Common myeloid progenitor, CD34-positive (primary cell): ENCODE measurements at regions of chr7 and their contacts with region 1.

Region 1: GRCh38 chr7:26853788-26854393 is 10.5 kb downstream of the SKAP2 start:
- DNase-seq: peak; percentile 73 to 86 (median 83)
- H3K4me3 ChIP-seq: no peak overlapping the region
- H3K27ac ChIP-seq: no peak overlapping the region
- H3K4me1 ChIP-seq: peaks cover 5 to 39% (median 27%) of the 10 kb centered on the region in 4 experiments
- H3K27me3 ChIP-seq: no peaks in the 10 kb centered on the region

Region 2: GRCh38 chr7:26673271-26673670 is 180.6 kb before region 1 on chr7:
- CTCF ChIA-PET with region 1: no interaction called
- POLR2A ChIA-PET with region 1: no interaction called
- DNase-seq: peak in 1 of 3 donors; percentile 66
- H3K4me3 ChIP-seq: peak overlapping the region in 4 of 7 experiments; percentile 44 to 73 (median 53)
- H3K27ac ChIP-seq: peak overlapping the region; percentile 81 to 83
- H3K4me1 ChIP-seq: peaks cover 10 to 76% (median 49%) of the 10 kb centered on the region in 4 experiments
- H3K27me3 ChIP-seq: no peaks in the 10 kb centered on the region

Region 3: DNA sequence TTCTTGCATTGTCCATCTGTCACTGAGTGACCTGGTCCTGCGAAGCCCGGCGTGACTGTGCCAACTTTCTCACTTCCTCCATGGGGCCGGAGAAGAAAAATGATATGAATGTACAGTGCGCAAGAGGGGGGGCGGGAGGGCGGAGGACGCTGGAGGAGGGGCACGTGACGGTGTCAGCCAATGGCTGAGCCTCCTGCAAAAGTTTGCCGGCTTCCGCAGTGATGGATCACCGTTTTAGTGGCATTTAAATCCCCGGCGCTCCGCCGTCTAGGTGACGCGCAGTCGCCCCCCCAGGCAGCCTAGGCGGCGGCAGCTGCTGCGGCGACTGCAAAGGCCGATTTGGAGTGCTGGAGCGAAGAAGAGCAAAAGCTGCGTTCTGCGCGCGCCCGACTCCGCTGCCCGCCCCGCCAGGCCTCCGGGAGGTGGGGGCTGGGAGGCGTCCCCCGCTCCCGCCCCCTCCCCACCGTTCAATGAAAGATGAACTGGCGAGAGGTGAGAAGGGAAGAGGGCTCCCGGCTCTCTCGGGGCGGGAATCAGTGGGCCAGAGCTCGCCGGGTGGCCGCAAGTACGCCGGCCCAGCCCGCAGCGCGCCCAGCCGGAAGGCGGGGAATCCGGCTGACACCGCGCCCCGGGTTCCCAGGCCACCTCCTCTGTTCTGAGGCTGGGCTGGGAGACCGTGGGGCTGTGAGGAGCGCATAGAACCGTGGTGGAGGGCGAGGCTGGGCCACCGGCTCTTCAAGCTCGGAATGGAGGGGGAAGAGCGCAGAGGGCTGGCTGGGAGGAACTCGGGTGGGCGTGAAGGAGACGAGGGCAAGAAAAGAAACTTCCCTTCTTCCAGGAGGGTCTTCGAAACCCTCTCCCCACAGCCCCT is 242.2 kb after region 1 on chr7 and contains the start of gene HOXA1:
- CTCF ChIA-PET with region 1: interaction called, 24 read pairs
- POLR2A ChIA-PET with region 1: no interaction called
- DNase-seq: peak; percentile 87 to 93 (median 92)
- H3K4me3 ChIP-seq: peak within 1 kb of the TSS; percentile 57 to 82 (median 77)
- H3K27ac ChIP-seq: no peak within 1 kb of the TSS
- H3K4me1 ChIP-seq: peaks cover 2 to 47% (median 37%) of the 10 kb centered on the region in 4 experiments
- H3K27me3 ChIP-seq: peaks cover 30 to 98% (median 50%) of the 10 kb centered on the region in 5 experiments

Region 4: DNA sequence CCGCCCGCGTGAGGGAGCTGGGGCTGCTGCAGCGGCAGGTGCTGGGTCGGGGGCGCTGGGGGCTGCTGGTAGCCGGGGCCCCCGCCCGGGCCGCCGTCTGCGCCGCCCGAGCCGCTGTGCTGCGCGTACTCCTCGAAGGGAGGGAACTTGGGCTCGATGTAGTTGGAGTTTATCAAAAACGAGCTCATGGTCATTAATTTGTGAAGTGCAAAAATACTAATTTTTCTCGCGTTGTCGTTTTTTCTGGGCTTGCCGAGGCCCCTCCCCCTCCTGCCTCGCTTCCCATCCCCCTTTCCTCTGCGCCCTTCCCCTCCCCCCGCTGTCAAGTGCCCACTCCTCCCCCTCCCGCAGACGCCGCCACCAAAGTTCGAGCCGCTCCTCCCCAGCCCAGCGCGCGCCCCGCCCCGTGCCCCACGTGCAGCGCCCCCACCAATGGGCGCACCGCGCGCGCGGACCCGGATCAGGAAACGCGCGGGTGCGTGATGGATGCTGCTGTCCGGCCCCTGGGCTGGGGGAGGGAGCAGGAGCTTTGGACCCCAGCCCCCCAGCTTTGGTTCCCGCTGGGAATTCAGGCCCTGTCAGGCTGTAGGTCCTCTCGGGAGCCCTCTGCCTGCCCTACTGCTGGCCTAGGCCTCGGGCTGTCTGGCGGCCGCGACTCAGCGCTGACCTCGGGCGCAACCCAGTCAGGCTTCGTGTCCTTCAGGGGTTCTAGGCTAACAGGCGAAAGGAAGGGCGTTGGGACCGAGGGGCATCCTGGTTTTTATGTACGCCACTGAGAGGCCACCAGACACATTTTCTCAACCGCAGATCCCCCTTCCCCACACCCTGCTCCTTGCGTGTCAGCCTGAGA is 276.9 kb after region 1 on chr7 and contains the start of gene HOXA4:
- CTCF ChIA-PET with region 1: interaction called, 14 read pairs
- POLR2A ChIA-PET with region 1: no interaction called
- DNase-seq: peak; percentile 84 to 90 (median 89)
- H3K4me3 ChIP-seq: peak within 1 kb of the TSS; percentile 23 to 77 (median 60)
- H3K27ac ChIP-seq: peak within 1 kb of the TSS; percentile 37 to 73
- H3K4me1 ChIP-seq: peaks cover 13 to 38% (median 17%) of the 10 kb centered on the region in 4 experiments
- H3K27me3 ChIP-seq: no peaks in the 10 kb centered on the region